ENCODE measurements at regions of chr16 and their contacts with region 1.

Region 1: DNA sequence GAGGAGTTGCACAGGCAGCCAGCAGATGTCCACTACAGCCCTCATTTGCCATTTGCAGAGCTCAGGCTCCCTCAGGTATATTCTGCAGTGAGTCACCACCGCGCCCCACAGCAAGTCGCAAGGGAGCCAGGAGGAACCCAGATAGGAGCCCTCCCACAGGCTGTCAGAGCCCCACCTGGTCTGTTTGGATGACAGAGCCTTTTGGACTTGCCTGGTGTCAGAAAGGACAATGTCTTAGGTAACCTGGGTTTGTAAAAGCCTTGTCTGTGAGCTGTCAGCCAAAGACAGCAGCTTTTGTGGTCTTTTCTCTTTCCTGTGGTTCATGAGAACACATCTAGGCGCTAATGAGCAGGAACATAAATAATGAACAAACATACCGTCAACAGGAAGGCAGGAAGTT is 70.9 kb downstream of the GNAO1 start:
- DNase-seq: peak; percentile 43 to 60
- H3K4me3 ChIP-seq: no peak overlapping the region
- H3K4me3 Mint-ChIP-seq: no peak overlapping the region
- H3K27ac Mint-ChIP-seq: no peak overlapping the region
- H3K4me1 ChIP-seq: peaks cover 19% of the 10 kb centered on the region
- H3K4me1 Mint-ChIP-seq: peaks cover 26% of the 10 kb centered on the region
- H3K27me3 ChIP-seq: no peaks in the 10 kb centered on the region
- H3K27me3 Mint-ChIP-seq: no peaks in the 10 kb centered on the region
- CTCF ChIP-seq: no peak

Region 2: DNA sequence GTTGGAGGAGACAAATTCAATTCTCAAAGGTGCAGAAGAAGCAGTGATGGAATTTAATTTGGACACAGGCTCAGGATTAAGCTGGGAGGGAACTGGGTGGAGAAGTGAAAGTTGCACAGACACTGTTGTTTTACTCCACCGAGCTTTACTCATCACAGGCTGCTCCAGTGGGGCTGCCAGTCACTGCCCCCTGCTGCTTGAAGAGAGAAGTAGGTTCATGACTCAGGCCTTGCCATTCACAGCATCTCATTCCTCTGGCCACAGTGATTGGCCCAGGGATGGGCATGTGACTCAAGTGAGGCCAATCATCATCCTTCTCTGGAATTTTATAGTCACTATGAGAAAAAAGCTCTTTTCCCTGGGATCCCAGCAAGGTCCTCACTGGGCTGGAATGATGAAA is 59.1 kb before region 1 on chr16:
- CTCF ChIA-PET with region 1: no interaction called
- POLR2A ChIA-PET with region 1: no interaction called
- intact Hi-C with region 1: loop called (anchors 5 kb)
- DNase-seq: peak in 1 of 2 experiments; percentile 34
- H3K4me3 ChIP-seq: no peak overlapping the region
- H3K4me3 Mint-ChIP-seq: no peak overlapping the region
- H3K27ac Mint-ChIP-seq: no peak overlapping the region
- H3K4me1 ChIP-seq: no peaks in the 10 kb centered on the region
- H3K4me1 Mint-ChIP-seq: no peaks in the 10 kb centered on the region
- H3K27me3 ChIP-seq: no peaks in the 10 kb centered on the region
- H3K27me3 Mint-ChIP-seq: peaks cover 6% of the 10 kb centered on the region
- CTCF ChIP-seq: peak in 1 of 2 experiments; percentile 32

Measured in Caco-2 (cell line).